A673 (cell line): ENCODE measurements at regions of chr22 and their contacts with region 1.

Region 1: DNA sequence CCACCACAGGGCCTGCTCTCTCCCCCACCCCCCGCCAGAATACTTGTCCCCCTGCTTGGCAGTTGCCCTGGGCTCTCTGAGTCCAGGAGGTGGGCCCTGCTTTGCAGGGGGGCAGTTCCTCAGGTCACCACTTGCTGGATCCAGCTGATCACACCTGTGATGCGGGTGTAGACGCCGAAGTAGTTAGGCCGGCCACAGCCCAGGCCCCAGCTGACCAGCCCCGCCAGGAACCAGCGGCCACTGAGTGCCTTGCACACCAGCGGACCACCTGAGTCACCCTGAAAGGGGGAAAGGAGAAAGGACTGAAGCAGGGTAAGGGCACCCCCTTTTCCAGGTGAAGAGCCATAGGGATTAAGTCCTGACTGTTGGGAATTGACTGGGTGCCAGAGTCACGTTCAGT is 14.4 kb downstream of the KCTD17 start:
- DNase-seq: no peak
- H3K4me3 ChIP-seq: no peak overlapping the region
- H3K27ac ChIP-seq: no peak overlapping the region
- H3K4me1 ChIP-seq: no peaks in the 10 kb centered on the region
- H3K27me3 ChIP-seq: peaks cover 23% of the 10 kb centered on the region
- CTCF ChIP-seq: no peak

Region 2: DNA sequence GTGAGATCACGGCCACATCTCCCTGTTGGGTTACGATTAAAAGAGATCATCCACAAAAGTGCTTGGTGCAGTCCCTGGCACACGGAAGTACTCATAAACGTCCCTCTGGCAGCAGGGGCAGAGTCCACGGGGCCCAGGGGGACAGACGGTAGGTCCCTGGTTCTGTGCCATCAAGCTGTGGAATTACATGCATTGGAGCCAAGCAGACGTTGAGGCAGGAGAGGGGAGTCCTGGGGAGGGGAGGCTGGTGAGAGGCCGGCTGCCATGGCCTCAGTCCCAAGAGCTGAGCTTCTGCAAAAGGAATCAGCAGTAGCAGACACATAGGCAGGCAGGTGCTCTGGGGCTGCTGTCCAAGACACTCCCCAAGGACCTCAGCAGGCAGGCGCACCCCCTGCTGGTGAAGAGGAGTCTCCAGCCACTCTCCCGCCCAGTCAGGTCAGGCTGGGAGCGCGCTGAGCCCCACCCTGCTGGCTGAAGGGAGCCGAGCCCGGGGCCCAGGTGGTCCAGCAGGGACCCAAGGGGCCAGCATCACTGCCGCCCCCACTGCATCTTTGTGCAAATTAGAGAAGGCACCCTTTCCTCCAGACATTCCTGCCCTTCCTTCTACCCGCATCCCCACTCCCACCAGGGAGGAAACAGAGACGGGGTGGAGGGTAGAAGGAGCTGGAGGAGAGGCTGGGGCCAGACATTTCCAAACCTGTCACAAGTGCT is 22.0 kb before region 1 on chr22:
- CTCF ChIA-PET with region 1: no interaction called
- POLR2A ChIA-PET with region 1: no interaction called
- intact Hi-C with region 1: no loop called
- DNase-seq: peak; percentile 38
- H3K4me3 ChIP-seq: no peak overlapping the region
- H3K27ac ChIP-seq: no peak overlapping the region
- H3K4me1 ChIP-seq: peaks cover 34% of the 10 kb centered on the region
- H3K27me3 ChIP-seq: no peaks in the 10 kb centered on the region
- CTCF ChIP-seq: peak; percentile 36; the same call in 1 of the 2 replicates

Region 3: GRCh38 chr22:37284805-37285355 is 218.9 kb after region 1 on chr22:
- CTCF ChIA-PET with region 1: no interaction called
- POLR2A ChIA-PET with region 1: interaction called, 18 read pairs
- intact Hi-C with region 1: no loop called
- DNase-seq: no peak
- H3K4me3 ChIP-seq: no peak overlapping the region
- H3K27ac ChIP-seq: no peak overlapping the region
- H3K4me1 ChIP-seq: no peaks in the 10 kb centered on the region
- H3K27me3 ChIP-seq: no peaks in the 10 kb centered on the region
- CTCF ChIP-seq: no peak

Region 4: GRCh38 chr22:38172832-38173638 is 1107.1 kb after region 1 on chr22:
- CTCF ChIA-PET with region 1: no interaction called
- POLR2A ChIA-PET with region 1: no interaction called
- intact Hi-C with region 1: no loop called
- DNase-seq: no peak
- H3K4me3 ChIP-seq: no peak overlapping the region
- H3K27ac ChIP-seq: no peak overlapping the region
- H3K4me1 ChIP-seq: no peaks in the 10 kb centered on the region
- H3K27me3 ChIP-seq: no peaks in the 10 kb centered on the region
- CTCF ChIP-seq: no peak